ENCODE measurements at regions of chrX and their contacts with region 1.

Region 1: DNA sequence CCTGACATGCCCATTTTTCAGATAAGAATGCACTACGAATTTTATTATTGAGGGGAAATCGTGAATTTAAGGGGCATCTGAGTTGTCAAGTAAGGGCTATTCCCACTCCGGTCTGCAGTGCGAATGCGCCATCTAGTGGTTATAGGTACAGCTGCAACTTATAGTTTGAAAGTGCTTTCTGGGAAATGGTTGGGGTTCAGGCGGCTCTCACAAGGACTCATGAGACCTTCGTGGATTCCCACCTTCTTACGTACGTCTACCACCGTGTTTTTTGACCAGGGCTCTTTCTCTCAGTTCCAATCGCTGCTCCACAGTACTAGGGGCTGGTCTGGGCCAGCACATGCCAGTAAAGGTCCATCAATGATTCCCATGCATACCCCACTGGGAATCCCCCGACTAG is 12.3 kb downstream of the MSL3 start:
- DNase-seq: peak; percentile 58
- H3K4me3 Mint-ChIP-seq: no peak overlapping the region
- H3K27ac Mint-ChIP-seq: peak overlapping the region; percentile 56
- H3K4me1 Mint-ChIP-seq: peaks cover 35% of the 10 kb centered on the region
- H3K27me3 Mint-ChIP-seq: no peaks in the 10 kb centered on the region

Region 2: DNA sequence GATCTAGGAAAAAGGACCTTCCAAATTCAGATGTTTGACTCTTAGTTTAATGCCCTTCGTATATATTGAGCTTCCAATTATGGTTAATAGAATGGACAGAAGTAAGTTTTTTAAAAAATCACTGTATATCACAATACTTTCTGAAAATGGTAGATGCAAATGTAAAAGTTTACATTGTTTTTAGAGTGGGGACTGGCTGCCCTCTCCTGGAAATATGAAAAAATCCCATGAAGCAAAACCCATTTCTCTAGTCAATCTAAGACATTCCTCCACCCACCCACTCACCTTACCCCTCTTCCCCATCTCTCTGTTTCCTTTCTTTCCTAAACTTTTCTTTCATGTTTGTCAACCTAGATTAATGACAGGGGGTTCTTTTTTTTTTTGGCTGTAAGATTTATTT is 239.1 kb before region 1 on chrX:
- CTCF ChIA-PET with region 1: interaction called, 10 read pairs
- POLR2A ChIA-PET with region 1: no interaction called
- DNase-seq: no peak
- H3K4me3 Mint-ChIP-seq: no peak overlapping the region
- H3K27ac Mint-ChIP-seq: no peak overlapping the region
- H3K4me1 Mint-ChIP-seq: no peaks in the 10 kb centered on the region
- H3K27me3 Mint-ChIP-seq: peaks cover 3% of the 10 kb centered on the region

Region 3: DNA sequence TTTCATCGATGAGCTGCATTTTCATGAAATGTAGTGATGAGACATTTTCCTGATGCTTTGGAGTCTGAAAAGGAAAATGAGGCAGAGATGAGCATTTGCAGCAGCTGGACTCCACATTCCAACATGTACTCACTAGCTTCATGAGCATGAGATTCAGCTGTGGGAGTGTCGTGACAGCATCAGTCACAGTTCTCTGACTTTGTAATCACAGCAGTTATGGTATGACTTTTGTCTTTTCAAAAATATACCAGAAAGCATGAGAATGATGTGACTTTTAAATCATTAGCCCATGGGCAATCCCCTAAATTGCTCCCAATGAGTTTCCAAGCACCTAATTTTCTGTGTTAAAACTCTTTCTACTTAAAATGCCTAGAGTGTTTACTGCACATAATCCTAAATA is 30.5 kb before region 1 on chrX:
- CTCF ChIA-PET with region 1: no interaction called
- POLR2A ChIA-PET with region 1: no interaction called
- DNase-seq: no peak
- H3K4me3 Mint-ChIP-seq: no peak overlapping the region
- H3K27ac Mint-ChIP-seq: no peak overlapping the region
- H3K4me1 Mint-ChIP-seq: no peaks in the 10 kb centered on the region
- H3K27me3 Mint-ChIP-seq: peaks cover 3% of the 10 kb centered on the region

Region 4: DNA sequence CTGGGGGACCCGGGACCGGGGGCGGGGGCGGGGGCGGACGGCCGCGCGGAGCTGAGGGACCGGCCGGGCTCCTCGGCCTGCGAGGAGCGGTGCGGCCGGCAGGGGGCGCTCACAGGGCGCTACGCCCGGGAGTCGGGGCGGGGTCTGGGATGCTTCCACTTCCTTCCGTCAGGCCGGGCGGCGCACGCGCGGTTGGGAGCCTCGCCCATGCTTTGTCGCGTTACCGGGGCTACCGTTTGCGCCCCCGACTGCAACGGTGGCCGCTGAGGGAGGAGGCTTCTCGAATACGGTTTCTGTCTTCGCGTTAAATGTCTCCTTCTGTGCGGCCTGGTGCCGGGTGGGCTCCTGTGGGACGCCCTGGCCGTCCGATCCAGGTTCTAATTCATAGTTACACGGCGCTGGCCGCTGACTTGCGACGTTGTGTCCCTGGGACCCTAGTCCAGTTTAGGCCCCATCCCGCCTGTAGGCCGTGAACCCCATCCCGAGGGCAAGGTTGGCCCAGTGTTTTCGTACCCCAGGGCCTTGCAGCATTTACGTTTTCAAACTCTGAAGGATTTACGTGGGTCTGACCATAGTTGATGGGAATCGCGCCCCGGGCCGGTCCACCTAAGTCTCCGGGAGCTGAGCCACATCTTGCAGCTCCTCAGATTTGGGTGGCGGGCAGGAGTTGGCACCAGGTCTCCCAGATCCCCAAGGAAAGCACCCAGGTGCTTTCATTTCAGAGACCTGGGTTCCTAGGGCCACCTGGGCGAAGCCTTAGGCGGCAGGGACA is 11.7 kb before region 1 on chrX:
- CTCF ChIA-PET with region 1: interaction called, 17 read pairs
- POLR2A ChIA-PET with region 1: interaction called, 5 read pairs
- DNase-seq: peak; percentile 87
- H3K4me3 Mint-ChIP-seq: peak overlapping the region; percentile 81
- H3K27ac Mint-ChIP-seq: peak overlapping the region; percentile 98
- H3K4me1 Mint-ChIP-seq: peaks cover 30% of the 10 kb centered on the region
- H3K27me3 Mint-ChIP-seq: peaks cover 13% of the 10 kb centered on the region